ENCODE measurements at regions of chr1 and their contacts with region 1.

Region 1: DNA sequence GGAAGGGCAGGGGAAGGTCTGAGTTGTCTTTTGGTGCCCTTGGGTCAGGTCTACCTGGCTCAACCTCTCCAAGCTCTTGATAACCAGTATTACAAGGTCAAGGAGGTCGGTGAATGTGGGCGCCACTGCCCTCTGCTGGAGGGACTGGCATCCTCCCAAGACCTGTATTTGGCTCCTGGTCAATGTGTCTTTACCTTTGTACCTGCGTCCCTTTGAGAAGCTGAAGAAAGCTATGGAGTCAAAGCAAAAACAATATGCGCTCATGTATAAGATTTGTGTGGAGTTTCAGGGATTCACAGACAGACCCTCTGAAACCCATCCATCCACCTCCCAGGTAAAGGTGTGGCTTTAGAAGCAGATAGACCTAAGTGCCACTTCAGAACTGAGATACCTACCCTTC is 61.8 kb upstream of the NBL1 start:
- DNase-seq: peak; percentile 75 to 94
- H3K4me3 ChIP-seq: no peak overlapping the region
- H3K27ac ChIP-seq: no peak overlapping the region
- H3K4me1 ChIP-seq: no peaks in the 10 kb centered on the region
- H3K27me3 ChIP-seq: no peaks in the 10 kb centered on the region
- CTCF ChIP-seq: peak; percentile 90 to 97 (median 91)
- EP300 ChIP-seq: no peak
- POLR2A ChIP-seq: no peak
- RAD21 ChIP-seq: peak; percentile 91 to 94

Region 2: GRCh38 chr1:19341201-19342072 is 240.9 kb before region 1 on chr1:
- CTCF ChIA-PET with region 1: interaction called, 25 read pairs
- POLR2A ChIA-PET with region 1: interaction called, 5 read pairs
- DNase-seq: peak; percentile 76 to 96
- H3K4me3 ChIP-seq: no peak overlapping the region
- H3K27ac ChIP-seq: no peak overlapping the region
- H3K4me1 ChIP-seq: peaks cover 0 to 15% (median 10%) of the 10 kb centered on the region in 4 experiments; a peak in 5 of 7 replicates
- H3K27me3 ChIP-seq: no peaks in the 10 kb centered on the region
- CTCF ChIP-seq: peak; percentile 78 to 95 (median 93)
- EP300 ChIP-seq: no peak
- POLR2A ChIP-seq: 0 out of 3 replicates have a peak, but pooled peaks of 1 of the 2 experiments have one; percentile 29
- RAD21 ChIP-seq: peak; percentile 38 to 48

Region 3: DNA sequence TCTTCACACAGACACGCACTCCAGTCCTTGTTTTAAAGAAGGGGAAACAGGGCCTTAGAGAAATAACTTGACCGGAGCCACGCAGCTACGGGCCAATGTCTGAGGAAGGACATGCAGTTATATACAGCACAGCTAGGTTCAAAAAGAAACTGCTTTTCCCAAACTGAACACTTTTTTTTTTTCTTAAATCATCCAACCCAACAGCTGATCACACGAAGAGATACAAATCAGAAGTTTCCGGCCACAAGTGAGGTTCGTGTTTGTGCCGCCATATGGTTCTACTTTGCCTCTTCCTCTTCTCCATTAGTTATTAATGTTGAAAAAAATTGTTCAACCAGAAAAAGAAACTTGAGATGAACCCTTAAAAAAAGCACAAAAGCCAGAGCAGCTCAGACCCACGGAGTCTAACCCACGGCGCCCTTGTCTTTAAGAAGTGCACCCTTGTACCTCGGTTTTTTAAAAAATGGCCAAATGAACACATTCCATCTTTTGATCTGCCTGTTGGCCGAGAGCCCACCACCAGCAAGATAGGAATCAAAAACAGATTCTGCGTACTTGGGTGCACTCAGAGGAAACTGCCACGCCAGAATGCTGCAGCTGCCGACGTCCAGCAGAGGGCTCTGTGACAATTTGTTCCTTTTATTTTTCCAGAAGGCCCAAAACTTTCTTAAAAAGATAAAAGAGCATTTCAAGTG is 191.3 kb before region 1 on chr1:
- CTCF ChIA-PET with region 1: interaction called, 10 read pairs
- POLR2A ChIA-PET with region 1: no interaction called
- DNase-seq: no peak
- H3K4me3 ChIP-seq: no peak overlapping the region
- H3K27ac ChIP-seq: no peak overlapping the region
- H3K4me1 ChIP-seq: peaks cover 0 to 7% (median 4%) of the 10 kb centered on the region in 4 experiments; a peak in 5 of 7 replicates
- H3K27me3 ChIP-seq: no peaks in the 10 kb centered on the region
- CTCF ChIP-seq: peak; percentile 68 to 86 (median 73)
- EP300 ChIP-seq: no peak
- POLR2A ChIP-seq: no peak
- RAD21 ChIP-seq: peak; percentile 52 to 61

Region 4: GRCh38 chr1:19439464-19440171 is 142.7 kb before region 1 on chr1:
- CTCF ChIA-PET with region 1: interaction called, 79 read pairs
- POLR2A ChIA-PET with region 1: no interaction called
- DNase-seq: no peak
- H3K4me3 ChIP-seq: no peak overlapping the region
- H3K27ac ChIP-seq: no peak overlapping the region
- H3K4me1 ChIP-seq: peaks cover 2 to 11% (median 9%) of the 10 kb centered on the region in 4 experiments
- H3K27me3 ChIP-seq: no peaks in the 10 kb centered on the region
- CTCF ChIP-seq: peak; percentile 56 to 68 (median 66)
- EP300 ChIP-seq: no peak
- POLR2A ChIP-seq: no peak
- RAD21 ChIP-seq: peak; percentile 78 to 81

Region 5: GRCh38 chr1:19485362-19486187 is 96.7 kb before region 1 on chr1 and contains the start of gene CAPZB:
- CTCF ChIA-PET with region 1: interaction called, 11 read pairs
- POLR2A ChIA-PET with region 1: interaction called, 3 read pairs
- DNase-seq: peak in 1 of 2 experiments; percentile 90
- H3K4me3 ChIP-seq: peak within 1 kb of the TSS; percentile 83 to 99 (median 94)
- H3K27ac ChIP-seq: peak within 1 kb of the TSS; percentile 92
- H3K4me1 ChIP-seq: peaks cover 19 to 41% (median 29%) of the 10 kb centered on the region in 4 experiments
- H3K27me3 ChIP-seq: no peaks in the 10 kb centered on the region
- CTCF ChIP-seq: no peak
- EP300 ChIP-seq: no peak
- POLR2A ChIP-seq: peak; percentile 79 to 85
- RAD21 ChIP-seq: 0 out of 4 replicates have a peak, but pooled peaks of 1 of the 2 experiments have one; percentile 1
- total RNA-seq, gene CAPZB: 371 TPM in 2 replicates

Region 6: GRCh38 chr1:19563324-19564097 is 18.8 kb before region 1 on chr1:
- CTCF ChIA-PET with region 1: interaction called, 26 read pairs
- POLR2A ChIA-PET with region 1: no interaction called
- DNase-seq: no peak
- H3K4me3 ChIP-seq: no peak overlapping the region
- H3K27ac ChIP-seq: no peak overlapping the region
- H3K4me1 ChIP-seq: no peaks in the 10 kb centered on the region
- H3K27me3 ChIP-seq: no peaks in the 10 kb centered on the region; a peak in 1 of 7 replicates
- CTCF ChIP-seq: no peak
- EP300 ChIP-seq: no peak
- POLR2A ChIP-seq: no peak
- RAD21 ChIP-seq: no peak

Region 7: DNA sequence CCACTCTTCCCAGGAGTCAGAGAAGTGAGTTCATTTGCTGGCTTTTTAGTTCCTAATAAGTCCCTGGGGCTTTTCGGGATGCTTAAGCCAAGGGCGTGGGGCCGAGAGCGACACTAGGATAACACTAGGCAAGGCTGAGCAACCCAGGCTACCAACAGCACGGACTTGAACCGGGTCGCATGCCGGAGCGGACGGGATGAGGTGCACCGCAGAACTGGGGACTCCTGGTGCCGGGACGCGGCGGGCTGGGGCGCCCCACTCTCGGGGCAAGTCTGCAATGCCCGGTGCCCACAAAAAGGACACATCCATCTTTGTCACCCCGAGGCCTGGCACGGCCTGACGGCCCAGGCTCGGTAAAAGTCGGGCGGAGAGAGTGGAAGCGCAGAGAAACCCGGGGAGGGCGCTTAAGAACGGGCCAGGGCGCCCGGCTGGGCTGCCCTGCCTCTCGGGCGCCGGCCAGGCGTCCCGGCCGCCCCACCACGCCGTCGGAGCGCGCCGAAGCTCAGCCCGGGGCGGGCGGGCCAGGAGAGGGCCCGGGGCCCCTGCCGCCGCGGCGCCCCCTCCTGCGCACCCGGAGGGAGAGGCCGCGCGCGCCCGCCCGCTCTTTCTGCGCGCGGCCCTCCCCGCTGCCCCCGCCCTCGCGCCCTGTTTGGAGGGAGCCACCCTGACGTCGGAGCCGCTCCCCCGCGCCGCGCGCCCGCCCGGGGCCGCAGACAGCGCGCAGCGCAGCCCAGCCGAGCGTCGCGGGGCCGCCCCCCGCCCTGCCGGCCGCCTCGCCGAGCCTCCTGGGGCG is 61.5 kb after region 1 on chr1 and contains the start of gene NBL1:
- CTCF ChIA-PET with region 1: interaction called, 23 read pairs
- POLR2A ChIA-PET with region 1: no interaction called
- DNase-seq: peak in 1 of 2 experiments; percentile 75
- H3K4me3 ChIP-seq: peak within 1 kb of the TSS; percentile 58 to 77 (median 66)
- H3K27ac ChIP-seq: no peak within 1 kb of the TSS
- H3K4me1 ChIP-seq: peaks cover 5 to 17% (median 12%) of the 10 kb centered on the region in 4 experiments
- H3K27me3 ChIP-seq: peaks cover 24 to 50% (median 35%) of the 10 kb centered on the region in 4 experiments
- CTCF ChIP-seq: no peak
- EP300 ChIP-seq: no peak
- POLR2A ChIP-seq: no peak
- RAD21 ChIP-seq: no peak
- total RNA-seq, gene NBL1: 9.7 and 10.4 TPM in 2 replicates

Region 8: GRCh38 chr1:19785295-19786059 is 203.2 kb after region 1 on chr1:
- CTCF ChIA-PET with region 1: no interaction called
- POLR2A ChIA-PET with region 1: no interaction called
- DNase-seq: no peak
- H3K4me3 ChIP-seq: no peak overlapping the region
- H3K27ac ChIP-seq: no peak overlapping the region
- H3K4me1 ChIP-seq: peaks cover 8 to 11% (median 10%) of the 10 kb centered on the region in 4 experiments
- H3K27me3 ChIP-seq: peaks cover 4 to 33% (median 28%) of the 10 kb centered on the region in 4 experiments
- CTCF ChIP-seq: no peak
- EP300 ChIP-seq: no peak
- POLR2A ChIP-seq: no peak
- RAD21 ChIP-seq: 0 out of 4 replicates have a peak, but pooled peaks of 1 of the 2 experiments have one; percentile 4

Measured in H1 (cell line).